ENCODE measurements at regions of chr12 and their contacts with region 1.

Region 1: DNA sequence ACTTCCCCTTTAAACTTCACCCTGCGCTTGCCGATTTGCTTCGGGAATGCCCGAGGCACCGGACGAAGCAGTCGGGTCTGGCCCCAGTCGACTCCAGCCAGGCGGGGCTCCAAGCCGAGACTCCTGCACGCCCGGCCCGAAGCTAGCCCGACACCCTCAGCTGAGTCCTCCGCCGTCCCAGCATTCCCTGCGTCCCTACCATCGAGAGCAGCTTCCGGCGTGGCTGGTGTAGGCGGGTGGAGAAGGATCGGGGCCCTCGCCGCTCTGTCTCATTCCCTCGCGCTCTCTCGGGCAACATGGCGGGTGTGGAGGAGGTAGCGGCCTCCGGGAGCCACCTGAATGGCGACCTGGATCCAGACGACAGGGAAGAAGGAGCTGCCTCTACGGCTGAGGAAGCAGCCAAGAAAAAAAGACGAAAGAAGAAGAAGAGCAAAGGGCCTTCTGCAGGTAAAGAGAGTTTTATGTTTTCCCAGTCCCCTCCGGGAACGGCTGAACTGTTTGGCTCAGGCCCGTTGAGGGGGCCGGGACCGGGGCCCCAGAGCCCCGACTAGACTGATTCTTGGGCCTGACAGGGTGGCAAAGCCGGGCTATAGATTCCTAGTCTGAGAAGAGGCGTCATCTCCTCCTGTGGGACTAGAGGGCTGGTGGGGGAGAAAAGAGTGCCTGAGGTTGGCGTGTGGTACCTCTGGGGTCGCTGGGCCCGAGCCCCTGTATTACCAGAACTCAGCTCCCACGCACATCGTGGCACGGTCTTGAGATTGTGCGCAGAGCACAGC is at the start of gene METAP2:
- DNase-seq: peak; percentile 90
- H3K4me3 Mint-ChIP-seq: peak within 1 kb of the TSS; percentile 100
- H3K27ac Mint-ChIP-seq: peak within 1 kb of the TSS; percentile 96
- H3K4me1 Mint-ChIP-seq: peaks cover 40% of the 10 kb centered on the region
- H3K27me3 Mint-ChIP-seq: peaks cover 2% of the 10 kb centered on the region
- total RNA-seq, gene METAP2: 66.1 to 71.5 TPM

Region 2: GRCh38 chr12:95003213-95003920 is 470.7 kb before region 1 on chr12 and contains the start of gene NDUFA12:
- CTCF ChIA-PET with region 1: no interaction called
- POLR2A ChIA-PET with region 1: interaction called, 17 read pairs
- DNase-seq: peak; percentile 95
- H3K4me3 Mint-ChIP-seq: peak within 1 kb of the TSS; percentile 87
- H3K27ac Mint-ChIP-seq: peak within 1 kb of the TSS; percentile 77
- H3K4me1 Mint-ChIP-seq: peaks cover 56% of the 10 kb centered on the region
- H3K27me3 Mint-ChIP-seq: no peaks in the 10 kb centered on the region
- total RNA-seq, gene NDUFA12: 155 to 167 TPM

Region 3: DNA sequence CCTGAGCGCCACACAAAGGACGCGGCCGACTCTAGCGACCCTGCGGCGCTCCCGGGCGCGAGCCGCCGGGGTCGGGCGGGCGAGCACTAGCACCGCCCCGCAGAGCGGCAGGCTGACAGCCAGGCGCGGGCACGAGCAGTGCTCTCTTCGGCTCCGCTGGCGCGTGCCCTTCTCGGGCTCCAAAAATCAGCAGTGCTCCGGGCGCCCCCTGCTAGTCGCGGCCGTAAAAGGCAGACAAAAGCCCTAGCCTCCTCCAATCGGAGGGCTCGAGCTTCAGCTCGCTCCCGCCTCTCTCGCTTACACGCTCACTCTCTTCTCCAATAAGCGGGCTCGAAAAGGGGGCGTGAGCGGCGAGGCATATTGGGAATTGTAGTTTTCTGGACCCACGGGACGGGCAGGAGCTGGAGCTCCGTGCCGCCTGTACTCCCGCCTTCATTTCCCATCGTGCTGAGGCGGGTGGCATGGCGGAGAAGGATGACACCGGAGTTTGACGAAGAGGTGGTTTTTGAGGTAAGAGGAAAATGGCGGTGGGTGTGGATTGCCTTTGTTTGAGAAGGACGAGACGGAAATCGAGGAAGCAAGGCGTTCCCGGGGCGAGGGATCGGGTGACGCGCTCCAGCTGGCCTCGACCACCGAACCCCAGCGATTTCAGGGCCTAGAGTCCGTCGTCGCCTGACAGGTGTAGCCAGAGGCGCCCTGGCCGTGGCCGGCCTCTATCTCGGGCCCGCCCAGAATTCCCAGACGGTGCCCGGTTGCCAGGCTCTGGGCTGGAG is 256.5 kb before region 1 on chr12 and contains the starts of genes FGD6 and VEZT:
- CTCF ChIA-PET with region 1: interaction called, 4 read pairs
- POLR2A ChIA-PET with region 1: interaction called, 22 read pairs
- DNase-seq: peak; percentile 99
- H3K4me3 Mint-ChIP-seq: peak within 1 kb of the TSS; percentile 89
- H3K27ac Mint-ChIP-seq: peak within 1 kb of the TSS; percentile 89
- H3K4me1 Mint-ChIP-seq: peaks cover 22% of the 10 kb centered on the region
- H3K27me3 Mint-ChIP-seq: peaks cover 8% of the 10 kb centered on the region
- total RNA-seq, gene FGD6: 0.45 to 0.71 TPM
- total RNA-seq, gene VEZT: 35.7 to 38.4 TPM

Region 4: GRCh38 chr12:95435355-95435754 is 38.7 kb before region 1 on chr12:
- CTCF ChIA-PET with region 1: no interaction called
- POLR2A ChIA-PET with region 1: no interaction called
- DNase-seq: no peak
- H3K4me3 Mint-ChIP-seq: no peak overlapping the region
- H3K27ac Mint-ChIP-seq: no peak overlapping the region
- H3K4me1 Mint-ChIP-seq: no peaks in the 10 kb centered on the region
- H3K27me3 Mint-ChIP-seq: peaks cover 2% of the 10 kb centered on the region

Region 5: GRCh38 chr12:95458771-95459170 is 15.3 kb before region 1 on chr12:
- CTCF ChIA-PET with region 1: no interaction called
- POLR2A ChIA-PET with region 1: no interaction called
- DNase-seq: no peak
- H3K4me3 Mint-ChIP-seq: no peak overlapping the region
- H3K27ac Mint-ChIP-seq: no peak overlapping the region
- H3K4me1 Mint-ChIP-seq: no peaks in the 10 kb centered on the region
- H3K27me3 Mint-ChIP-seq: peaks cover 2% of the 10 kb centered on the region

Region 6: GRCh38 chr12:95487024-95487423 is 13.0 kb after region 1 on chr12:
- CTCF ChIA-PET with region 1: interaction called, 5 read pairs
- POLR2A ChIA-PET with region 1: interaction called, 14 read pairs
- DNase-seq: no peak
- H3K4me3 Mint-ChIP-seq: no peak overlapping the region
- H3K27ac Mint-ChIP-seq: no peak overlapping the region
- H3K4me1 Mint-ChIP-seq: peaks cover 8% of the 10 kb centered on the region
- H3K27me3 Mint-ChIP-seq: no peaks in the 10 kb centered on the region

Region 7: GRCh38 chr12:95506707-95507523 is 32.8 kb after region 1 on chr12:
- CTCF ChIA-PET with region 1: no interaction called
- POLR2A ChIA-PET with region 1: no interaction called
- DNase-seq: no peak
- H3K4me3 Mint-ChIP-seq: no peak overlapping the region
- H3K27ac Mint-ChIP-seq: no peak overlapping the region
- H3K4me1 Mint-ChIP-seq: peaks cover 2% of the 10 kb centered on the region
- H3K27me3 Mint-ChIP-seq: no peaks in the 10 kb centered on the region

Region 8: DNA sequence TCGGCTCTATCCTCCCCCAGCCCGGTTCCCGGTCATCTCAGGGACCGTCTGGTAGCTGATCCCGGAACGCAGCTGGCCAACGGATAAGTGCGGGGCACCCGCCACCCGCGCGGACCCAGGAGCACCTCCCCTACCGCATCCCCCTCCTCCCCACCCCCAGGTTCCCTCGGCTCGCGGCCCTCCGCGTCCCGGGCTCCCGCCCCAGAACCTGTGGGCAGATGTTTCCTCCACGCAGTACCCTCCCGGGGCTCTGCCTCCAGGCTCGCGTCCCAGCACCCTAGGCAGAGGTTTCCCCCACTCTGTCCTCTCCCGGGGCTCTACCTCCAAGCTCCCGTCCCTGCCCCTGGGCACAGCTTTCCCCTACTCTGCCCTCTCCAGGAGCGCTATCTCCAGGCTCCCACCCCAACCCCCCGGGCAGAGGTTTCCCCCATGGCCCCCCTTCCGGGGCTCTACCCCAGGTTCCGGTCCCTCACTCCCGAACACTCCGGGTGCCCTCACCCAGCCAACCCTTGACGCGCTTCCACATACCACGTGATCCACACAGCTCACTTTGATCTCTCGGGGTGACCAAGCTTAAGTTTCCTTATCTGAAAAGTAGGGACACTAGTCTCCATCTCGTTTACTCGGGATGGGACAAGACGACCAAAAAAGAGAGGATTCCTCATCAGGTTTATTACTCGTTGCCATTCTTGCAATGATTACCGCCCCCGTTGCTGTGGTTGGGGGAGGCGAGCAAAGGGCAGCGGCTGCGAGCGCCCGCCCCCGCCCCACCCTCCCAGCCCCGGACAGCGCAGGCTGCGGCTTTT is 468.7 kb after region 1 on chr12 and contains the start of gene CCDC38:
- CTCF ChIA-PET with region 1: no interaction called
- POLR2A ChIA-PET with region 1: interaction called, 11 read pairs
- DNase-seq: peak; percentile 86
- H3K4me3 Mint-ChIP-seq: peak within 1 kb of the TSS; percentile 95
- H3K27ac Mint-ChIP-seq: peak within 1 kb of the TSS; percentile 85
- H3K4me1 Mint-ChIP-seq: peaks cover 12% of the 10 kb centered on the region
- H3K27me3 Mint-ChIP-seq: peaks cover 6% of the 10 kb centered on the region
- total RNA-seq, gene CCDC38: not detected

Measured in activated CD4-positive, alpha-beta memory T cell treated with anti-CD3 and anti-CD28 coated beads, Interleukin-2, amount 10 ng/mL, durations not matched to agents 7 days and 5 days (primary cell).